Psoas muscle (tissue), 8 donors: ENCODE measurements at regions of chr10 and their contacts with region 1.

Region 1: DNA sequence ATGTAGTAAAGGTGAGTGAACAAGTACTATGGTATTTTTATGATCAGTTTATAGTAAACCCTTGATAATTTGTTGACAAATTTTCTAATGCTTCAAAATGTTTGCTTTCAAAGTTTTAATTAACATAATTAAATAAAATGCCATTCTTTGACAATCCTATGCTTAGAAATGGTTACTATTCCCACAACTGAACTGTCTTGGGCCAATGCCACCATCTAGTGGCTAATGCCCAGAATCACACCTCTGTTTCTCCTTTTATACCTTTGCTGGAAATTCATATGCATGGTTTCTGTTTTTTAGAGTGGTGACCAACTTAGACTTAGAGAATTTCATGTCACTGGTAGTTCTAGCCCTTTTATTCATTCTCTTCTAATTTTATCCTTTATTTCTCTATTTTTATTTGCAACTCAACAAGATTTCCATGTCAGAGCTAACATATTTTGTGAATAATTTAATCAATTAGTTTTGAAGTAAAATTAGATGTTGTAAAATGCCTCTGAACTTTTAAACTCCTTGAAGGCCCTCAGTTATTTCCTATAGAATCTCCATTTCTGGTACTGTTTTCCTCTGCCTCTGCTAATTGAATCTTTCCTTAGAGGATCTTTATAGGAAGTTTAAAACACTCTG is 31.1 kb downstream of the PCGF5 start:
- DNase-seq: peak; percentile 18 to 41
- ATAC-seq: peak in 3 of 4 donors; percentile 76 to 86 (median 83)
- H3K4me3 ChIP-seq: no peak overlapping the region
- H3K27ac ChIP-seq: no peak overlapping the region
- H3K4me1 ChIP-seq: no peaks in the 10 kb centered on the region
- H3K27me3 ChIP-seq: no peaks in the 10 kb centered on the region
- CTCF ChIP-seq: peak; percentile 96

Region 2: DNA sequence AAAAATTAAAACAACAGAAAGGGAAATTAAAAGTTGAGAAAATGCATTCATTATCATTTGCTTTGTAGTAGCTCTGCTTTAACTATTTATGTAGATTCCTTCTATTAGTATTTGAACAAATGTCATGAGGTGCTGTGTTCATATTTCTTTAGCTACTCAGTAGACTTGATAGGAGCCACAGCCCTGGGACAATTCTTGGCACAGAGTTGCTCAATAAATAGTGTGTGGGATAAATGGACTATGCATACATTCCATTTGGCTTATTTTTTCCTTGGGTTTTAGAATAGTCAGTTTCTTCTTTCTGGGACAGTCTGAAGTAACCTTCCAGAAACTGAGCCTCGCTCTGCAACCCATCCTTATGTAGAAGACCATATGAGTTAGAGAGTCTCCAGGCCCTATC is 366.4 kb before region 1 on chr10:
- intact Hi-C with region 1: loop called in 1 of 2 experiments (anchors 5 kb)
- DNase-seq: no peak
- ATAC-seq: no peak
- H3K4me3 ChIP-seq: no peak overlapping the region
- H3K27ac ChIP-seq: no peak overlapping the region
- H3K4me1 ChIP-seq: peaks cover 16% of the 10 kb centered on the region
- H3K27me3 ChIP-seq: no peaks in the 10 kb centered on the region
- CTCF ChIP-seq: no peak

Region 3: DNA sequence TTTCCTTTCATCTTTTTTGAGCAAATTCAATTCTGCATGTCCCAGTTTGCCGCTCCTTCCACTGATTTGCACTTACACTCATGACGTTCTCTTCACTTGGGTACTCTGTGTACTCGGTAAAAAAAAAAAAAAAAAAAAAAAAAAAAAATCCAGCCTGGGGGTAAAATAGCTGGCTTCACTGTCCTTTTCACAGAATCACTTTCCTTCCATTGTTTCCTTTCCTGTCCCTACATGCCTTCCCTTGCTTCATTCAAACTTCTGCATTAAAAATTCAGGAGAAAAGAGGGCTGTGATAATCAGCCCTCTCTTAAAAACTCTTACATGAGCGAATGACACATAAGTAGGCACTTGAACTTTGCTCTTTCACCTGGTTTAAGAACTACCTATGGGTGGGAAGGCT is 339.4 kb before region 1 on chr10:
- intact Hi-C with region 1: loop called (anchors 1 to 2 kb)
- DNase-seq: no peak
- ATAC-seq: peak in 3 of 4 donors; percentile 2 to 6 (median 4)
- H3K4me3 ChIP-seq: no peak overlapping the region
- H3K27ac ChIP-seq: peak overlapping the region; percentile 48
- H3K4me1 ChIP-seq: no peaks in the 10 kb centered on the region
- H3K27me3 ChIP-seq: no peaks in the 10 kb centered on the region
- CTCF ChIP-seq: no peak

Region 4: DNA sequence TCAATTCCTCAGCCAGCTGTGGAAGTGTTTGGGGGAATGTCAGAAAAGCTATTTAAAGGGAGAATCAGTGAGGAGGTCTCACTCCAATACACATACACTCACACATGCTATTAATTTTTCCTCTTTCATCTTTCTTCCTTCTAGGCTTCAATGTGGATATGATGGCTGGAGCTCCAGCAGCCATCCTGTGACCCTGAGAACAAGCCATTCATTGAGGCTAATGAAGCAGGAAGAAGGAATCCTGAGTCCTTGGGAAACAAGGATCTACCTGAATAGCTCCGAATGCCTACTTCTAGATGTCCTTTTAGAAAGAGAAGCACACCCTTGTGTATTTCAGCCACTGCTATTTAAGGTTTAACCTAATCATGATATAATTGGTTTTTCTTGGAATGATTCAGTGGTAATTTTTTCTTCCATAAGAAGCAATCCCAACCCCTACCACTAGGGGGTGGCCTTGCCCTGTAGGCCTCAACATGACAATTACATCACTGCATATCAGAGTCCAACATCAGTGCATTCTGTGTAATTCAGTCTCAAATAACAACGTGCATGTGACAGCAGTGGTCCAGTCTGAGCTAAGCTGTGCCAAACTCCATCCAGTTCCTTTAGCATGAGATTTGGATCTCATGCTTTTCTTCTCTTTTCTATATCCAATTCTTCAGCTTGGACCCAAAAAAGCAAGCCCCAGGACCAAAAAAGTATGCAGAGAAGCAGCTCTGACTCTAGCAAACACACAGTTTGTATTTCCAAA is 245.4 kb before region 1 on chr10:
- intact Hi-C with region 1: loop called (anchors 2 to 5 kb)
- DNase-seq: peak in 1 of 2 donors; percentile 29
- ATAC-seq: peak; percentile 89 to 96 (median 91)
- H3K4me3 ChIP-seq: no peak overlapping the region
- H3K27ac ChIP-seq: no peak overlapping the region
- H3K4me1 ChIP-seq: no peaks in the 10 kb centered on the region
- H3K27me3 ChIP-seq: no peaks in the 10 kb centered on the region
- CTCF ChIP-seq: peak; percentile 99

Region 5: DNA sequence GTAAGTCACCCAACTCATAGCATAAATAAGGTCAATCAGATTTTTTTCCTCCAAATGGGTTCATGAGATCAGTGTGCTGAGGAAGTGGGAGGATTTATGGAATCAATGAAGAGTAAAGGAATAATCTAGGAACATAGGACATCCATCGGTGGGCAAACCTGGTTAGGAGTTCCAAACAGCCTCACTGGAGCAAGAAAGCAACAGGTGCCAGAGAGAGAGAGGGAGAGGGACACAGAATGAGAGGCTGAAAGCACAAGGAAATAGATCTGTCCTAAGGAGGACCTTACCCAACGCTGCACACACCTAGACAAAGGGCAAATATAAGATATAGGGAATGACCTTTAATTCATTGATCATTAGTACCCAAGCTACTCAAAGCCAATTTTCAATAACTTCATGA is 211.2 kb before region 1 on chr10:
- intact Hi-C with region 1: loop called in 1 of 2 experiments (anchors 2 kb)
- DNase-seq: no peak
- ATAC-seq: no peak
- H3K4me3 ChIP-seq: no peak overlapping the region
- H3K27ac ChIP-seq: no peak overlapping the region
- H3K4me1 ChIP-seq: peaks cover 17% of the 10 kb centered on the region
- H3K27me3 ChIP-seq: no peaks in the 10 kb centered on the region
- CTCF ChIP-seq: no peak

Region 6: GRCh38 chr10:91088300-91089140 is 163.0 kb before region 1 on chr10:
- intact Hi-C with region 1: loop called (anchors 2 to 5 kb)
- DNase-seq: no peak
- ATAC-seq: peak; percentile 51 to 70 (median 60)
- H3K4me3 ChIP-seq: no peak overlapping the region
- H3K27ac ChIP-seq: peak overlapping the region; percentile 41
- H3K4me1 ChIP-seq: peaks cover 11% of the 10 kb centered on the region
- H3K27me3 ChIP-seq: no peaks in the 10 kb centered on the region
- CTCF ChIP-seq: peak; percentile 10

Region 7: DNA sequence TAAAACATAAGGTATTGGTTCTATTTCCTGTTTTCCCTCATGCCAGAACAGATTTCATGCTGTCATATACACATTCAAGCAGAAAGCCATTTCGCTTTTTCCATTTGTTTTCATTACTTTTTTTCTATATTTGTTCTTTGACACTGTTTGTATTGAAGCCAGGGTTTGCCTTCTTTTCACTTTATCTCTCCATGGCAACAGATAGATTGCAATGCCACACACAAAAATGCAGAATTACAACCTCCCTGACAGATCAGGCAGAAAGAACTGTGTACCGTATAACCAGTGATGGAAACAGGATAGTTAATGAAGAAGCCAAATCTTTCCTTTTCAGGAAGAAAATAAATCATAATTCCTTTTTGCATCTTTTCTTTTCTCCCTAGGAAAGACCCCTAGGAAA is 134.0 kb before region 1 on chr10:
- intact Hi-C with region 1: no loop called
- DNase-seq: no peak
- ATAC-seq: no peak
- H3K4me3 ChIP-seq: no peak overlapping the region
- H3K27ac ChIP-seq: no peak overlapping the region
- H3K4me1 ChIP-seq: no peaks in the 10 kb centered on the region
- H3K27me3 ChIP-seq: no peaks in the 10 kb centered on the region
- CTCF ChIP-seq: no peak

Region 8: GRCh38 chr10:91313796-91314485 is 62.4 kb after region 1 on chr10:
- intact Hi-C with region 1: no loop called
- DNase-seq: no peak
- ATAC-seq: no peak
- H3K4me3 ChIP-seq: no peak overlapping the region
- H3K27ac ChIP-seq: no peak overlapping the region
- H3K4me1 ChIP-seq: peaks cover 4% of the 10 kb centered on the region
- H3K27me3 ChIP-seq: no peaks in the 10 kb centered on the region
- CTCF ChIP-seq: no peak